ENCODE measurements at regions of chr14 and their contacts with region 1.

Region 1: DNA sequence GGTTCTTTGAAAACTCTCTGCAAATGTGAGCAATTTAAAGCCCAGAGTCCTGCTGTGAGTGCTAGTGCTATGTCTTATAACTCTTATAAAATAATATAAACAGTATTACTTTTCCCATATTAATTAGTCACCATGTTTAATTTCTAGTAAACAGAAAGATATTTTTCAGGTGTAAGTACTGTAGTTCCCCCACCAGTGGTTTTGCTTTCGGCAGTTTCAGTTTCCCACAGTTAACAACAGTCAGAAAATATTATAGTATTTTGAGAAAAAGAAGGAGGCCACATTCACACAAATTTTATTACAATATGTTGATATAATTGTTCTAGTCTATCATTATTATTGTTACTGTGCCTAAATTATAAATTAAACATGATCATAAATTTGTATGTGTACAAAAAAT is 800.5 kb downstream of the LRFN5 start:
- DNase-seq: no peak
- ATAC-seq: no peak
- H3K4me3 Mint-ChIP-seq: no peak overlapping the region
- H3K27ac Mint-ChIP-seq: no peak overlapping the region
- H3K4me1 Mint-ChIP-seq: peaks cover 9% of the 10 kb centered on the region
- H3K27me3 Mint-ChIP-seq: no peaks in the 10 kb centered on the region
- CTCF ChIP-seq: no peak

Region 2: GRCh38 chr14:42391162-42391834 is 15.9 kb before region 1 on chr14:
- CTCF ChIA-PET with region 1: no interaction called
- POLR2A ChIA-PET with region 1: no interaction called
- intact Hi-C with region 1: loop called (anchors 2 kb)
- DNase-seq: no peak
- ATAC-seq: no peak
- H3K4me3 Mint-ChIP-seq: no peak overlapping the region
- H3K27ac Mint-ChIP-seq: no peak overlapping the region
- H3K4me1 Mint-ChIP-seq: peaks cover 7% of the 10 kb centered on the region
- H3K27me3 Mint-ChIP-seq: no peaks in the 10 kb centered on the region
- CTCF ChIP-seq: no peak

Measured in activated B cell treated with CpG ODN at 0.5 μM for 24 hours (primary cell).